Naive thymus-derived CD8-positive, alpha-beta T cell (primary cell): ENCODE measurements at regions of chr11 and their contacts with region 1.

Region 1: GRCh38 chr11:130131961-130132850 is 27.4 kb upstream of the ST14 start:
- DNase-seq: peak in 9 of 10 donors; percentile 36 to 77 (median 60)
- ATAC-seq: peak; percentile 78 to 84
- H3K4me3 Mint-ChIP-seq: no peak overlapping the region
- H3K27ac Mint-ChIP-seq: no peak overlapping the region
- H3K4me1 Mint-ChIP-seq: peaks cover 0 to 14% (median 0%) of the 10 kb centered on the region in 4 donors
- H3K27me3 Mint-ChIP-seq: no peaks in the 10 kb centered on the region

Region 2: DNA sequence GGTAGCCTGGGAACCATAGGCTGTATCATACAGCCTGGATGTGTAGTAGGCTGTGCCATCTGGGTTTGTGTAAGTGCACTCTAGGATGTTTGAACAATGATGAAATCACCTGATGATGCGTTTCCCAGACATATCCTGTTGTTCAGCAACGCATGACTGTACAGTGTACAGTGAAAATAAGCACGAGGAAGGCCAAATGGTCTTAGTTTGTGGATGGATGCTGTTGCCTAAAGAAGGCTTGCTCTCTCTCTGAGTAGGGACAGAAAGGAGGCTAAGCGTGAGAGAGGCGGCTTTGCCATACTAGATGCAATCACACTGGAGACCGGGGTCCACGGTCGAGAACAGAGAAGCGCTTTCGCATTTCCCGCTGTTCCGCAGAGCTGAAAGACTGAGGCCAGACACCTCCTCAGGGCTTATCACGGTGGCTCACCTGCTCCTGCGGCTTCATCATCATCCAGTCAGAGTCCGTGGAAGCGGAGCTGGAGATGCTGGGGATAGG is 90.1 kb before region 1 on chr11:
- POLR2A ChIA-PET with region 1: interaction called, 10 read pairs
- DNase-seq: no peak
- ATAC-seq: no peak
- H3K4me3 Mint-ChIP-seq: no peak overlapping the region
- H3K27ac Mint-ChIP-seq: no peak overlapping the region
- H3K4me1 Mint-ChIP-seq: peaks cover 0 to 6% (median 2%) of the 10 kb centered on the region in 4 donors
- H3K27me3 Mint-ChIP-seq: peaks cover 0 to 33% (median 14%) of the 10 kb centered on the region in 5 donors